Naive thymus-derived CD4-positive, alpha-beta T cell (primary cell): ENCODE measurements at regions of chr1 and their contacts with region 1.

Region 1: DNA sequence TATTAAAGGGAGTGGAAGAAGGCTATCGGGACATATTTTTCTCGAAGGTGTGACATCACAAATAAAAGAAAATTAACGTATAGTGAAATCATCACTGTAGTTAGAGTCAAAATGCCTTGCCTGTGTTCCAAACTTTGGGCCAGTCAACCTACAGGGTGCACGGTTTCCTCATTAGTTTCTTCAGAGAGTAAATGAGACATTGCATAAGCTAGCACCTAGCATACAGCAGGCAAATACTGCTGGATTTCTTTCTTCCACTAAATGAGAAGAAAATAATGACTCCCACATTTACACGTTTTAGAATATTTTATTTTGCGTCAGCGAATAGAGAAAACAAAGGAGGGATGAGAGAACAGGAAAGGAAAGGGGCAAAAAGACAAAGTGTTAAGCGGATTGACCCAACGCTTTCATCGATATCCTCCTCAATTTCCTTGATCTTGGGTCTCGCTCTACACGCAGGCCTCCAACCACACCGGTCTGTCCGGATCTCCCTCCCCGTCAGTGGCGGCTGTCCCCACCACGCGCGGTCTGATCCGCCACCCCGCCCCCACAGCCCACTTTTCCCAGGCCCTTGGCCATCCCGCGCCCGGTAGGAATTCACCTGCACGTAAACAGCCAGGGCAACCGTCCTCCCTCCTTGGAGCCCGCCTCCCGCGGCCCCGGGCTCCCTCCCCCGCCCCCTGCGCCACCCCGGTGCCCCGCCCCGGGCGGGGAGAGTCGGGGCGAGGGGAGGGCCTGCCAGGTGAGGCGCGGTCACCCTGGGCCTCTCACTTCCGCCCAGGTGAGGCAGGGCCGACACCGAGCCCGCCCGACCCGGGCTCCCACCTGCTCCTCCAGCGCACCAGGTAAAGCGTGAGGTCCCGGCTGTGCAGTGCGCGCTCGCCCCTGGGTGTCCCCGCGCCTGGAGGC is at the start of gene PATJ:
- DNase-seq: peak; percentile 56 to 78 (median 73)
- ATAC-seq: peak; percentile 93
- H3K4me3 ChIP-seq: peak within 1 kb of the TSS; percentile 62
- H3K4me3 Mint-ChIP-seq: peak within 1 kb of the TSS; percentile 94 to 100 (median 97)
- H3K27ac ChIP-seq: peak within 1 kb of the TSS; percentile 76
- H3K27ac Mint-ChIP-seq: peak within 1 kb of the TSS; percentile 88 to 99 (median 96)
- H3K4me1 ChIP-seq: peaks cover 9 to 13% of the 10 kb centered on the region in 2 donors
- H3K4me1 Mint-ChIP-seq: peaks cover 17 to 46% (median 35%) of the 10 kb centered on the region in 7 donors
- H3K27me3 ChIP-seq: no peaks in the 10 kb centered on the region
- H3K27me3 Mint-ChIP-seq: no peaks in the 10 kb centered on the region
- total RNA-seq, gene PATJ: 13.4 to 64.5 (median 34.0) TPM

Region 2: DNA sequence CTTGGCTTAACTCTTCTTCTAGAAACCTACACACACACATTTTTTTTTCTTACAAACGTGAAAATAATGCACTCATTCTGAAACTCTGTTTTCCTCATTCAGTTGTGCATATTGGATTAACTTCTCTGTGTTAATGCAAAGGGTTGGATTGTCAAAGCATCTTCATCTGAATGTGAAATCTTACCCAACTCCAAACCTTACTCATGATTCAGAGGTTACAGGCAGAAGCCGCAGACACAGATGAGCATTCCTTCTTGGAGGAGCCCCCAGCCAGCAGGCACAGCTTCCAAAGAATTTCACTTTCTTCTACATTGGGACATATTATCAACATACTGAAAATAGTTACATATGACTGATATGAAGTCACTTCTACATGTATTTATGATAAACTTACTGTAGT is 16.0 kb after region 1 on chr1:
- CTCF ChIA-PET with region 1: no interaction called
- POLR2A ChIA-PET with region 1: no interaction called
- intact Hi-C with region 1: no loop called
- DNase-seq: no peak
- ATAC-seq: no peak
- H3K4me3 ChIP-seq: no peak overlapping the region
- H3K4me3 Mint-ChIP-seq: no peak overlapping the region
- H3K27ac ChIP-seq: no peak overlapping the region
- H3K27ac Mint-ChIP-seq: peak overlapping the region in 3 of 9 donors; percentile 1 to 68 (median 45)
- H3K4me1 ChIP-seq: no peaks in the 10 kb centered on the region
- H3K4me1 Mint-ChIP-seq: peaks cover 0 to 30% (median 11%) of the 10 kb centered on the region in 7 donors
- H3K27me3 ChIP-seq: no peaks in the 10 kb centered on the region
- H3K27me3 Mint-ChIP-seq: no peaks in the 10 kb centered on the region

Region 3: GRCh38 chr1:61782771-61783170 is 40.8 kb after region 1 on chr1:
- CTCF ChIA-PET with region 1: no interaction called
- POLR2A ChIA-PET with region 1: interaction called, 8 read pairs
- intact Hi-C with region 1: loop called (anchors 1 to 5 kb)
- DNase-seq: peak in 8 of 9 donors; percentile 49 to 93 (median 90)
- ATAC-seq: peak; percentile 98
- H3K4me3 ChIP-seq: no peak overlapping the region
- H3K4me3 Mint-ChIP-seq: peak overlapping the region; percentile 66 to 94 (median 76)
- H3K27ac ChIP-seq: peak overlapping the region; percentile 39
- H3K27ac Mint-ChIP-seq: peak overlapping the region; percentile 75 to 95 (median 88)
- H3K4me1 ChIP-seq: peaks cover 26 to 32% of the 10 kb centered on the region in 2 donors
- H3K4me1 Mint-ChIP-seq: peaks cover 18 to 77% (median 67%) of the 10 kb centered on the region in 7 donors
- H3K27me3 ChIP-seq: no peaks in the 10 kb centered on the region
- H3K27me3 Mint-ChIP-seq: no peaks in the 10 kb centered on the region

Region 4: DNA sequence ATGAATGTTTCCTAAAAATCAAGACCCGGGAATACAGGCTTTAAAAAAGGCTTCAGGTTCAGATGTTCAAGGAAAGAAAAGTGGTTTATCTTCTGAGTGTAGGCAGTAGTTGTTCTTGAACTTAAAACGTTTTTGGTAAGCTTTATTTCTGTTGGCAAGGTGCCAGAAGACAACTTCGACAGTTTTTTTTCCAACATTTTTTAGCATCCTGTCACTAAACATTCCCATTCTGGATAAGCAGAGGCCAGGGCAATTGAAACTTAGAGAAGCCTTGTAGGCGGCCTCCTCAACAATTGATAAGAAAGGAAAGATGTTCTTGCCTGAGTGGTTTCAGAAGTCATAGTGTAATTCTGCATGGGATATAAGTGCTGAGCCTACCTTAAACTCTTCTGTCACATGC is 67.0 kb after region 1 on chr1:
- CTCF ChIA-PET with region 1: no interaction called
- POLR2A ChIA-PET with region 1: no interaction called
- intact Hi-C with region 1: loop called in 1 of 2 experiments (anchors 5 kb)
- DNase-seq: no peak
- ATAC-seq: no peak
- H3K4me3 ChIP-seq: no peak overlapping the region
- H3K4me3 Mint-ChIP-seq: no peak overlapping the region
- H3K27ac ChIP-seq: no peak overlapping the region
- H3K27ac Mint-ChIP-seq: no peak overlapping the region
- H3K4me1 ChIP-seq: no peaks in the 10 kb centered on the region
- H3K4me1 Mint-ChIP-seq: peaks cover 0 to 2% (median 0%) of the 10 kb centered on the region in 7 donors
- H3K27me3 ChIP-seq: no peaks in the 10 kb centered on the region
- H3K27me3 Mint-ChIP-seq: no peaks in the 10 kb centered on the region

Region 5: DNA sequence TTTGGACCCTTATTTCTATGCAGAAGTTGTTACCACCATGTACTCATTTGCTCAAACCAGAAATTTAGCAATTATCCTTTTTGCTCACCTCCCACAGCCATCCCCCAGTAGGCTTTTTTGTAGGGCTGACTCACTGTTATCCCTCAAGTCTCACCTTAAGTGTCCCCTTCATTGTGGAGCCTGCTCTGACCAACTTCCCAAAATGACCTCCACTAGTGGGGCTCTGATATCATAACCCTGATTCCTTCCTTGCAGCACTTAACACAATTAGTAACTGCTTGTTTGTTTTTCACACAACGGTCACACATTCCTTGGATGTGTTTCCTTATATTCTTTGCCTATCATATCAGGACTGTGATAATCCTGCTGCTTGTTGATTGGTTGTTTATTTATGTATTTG is 77.0 kb after region 1 on chr1:
- CTCF ChIA-PET with region 1: no interaction called
- POLR2A ChIA-PET with region 1: no interaction called
- intact Hi-C with region 1: no loop called
- DNase-seq: no peak
- ATAC-seq: no peak
- H3K4me3 ChIP-seq: no peak overlapping the region
- H3K4me3 Mint-ChIP-seq: no peak overlapping the region
- H3K27ac ChIP-seq: no peak overlapping the region
- H3K27ac Mint-ChIP-seq: no peak overlapping the region
- H3K4me1 ChIP-seq: no peaks in the 10 kb centered on the region
- H3K4me1 Mint-ChIP-seq: no peaks in the 10 kb centered on the region
- H3K27me3 ChIP-seq: no peaks in the 10 kb centered on the region
- H3K27me3 Mint-ChIP-seq: no peaks in the 10 kb centered on the region